ENCODE measurements at regions of chr12 and their contacts with region 1.

Region 1: GRCh38 chr12:70576346-70577282 is 60.6 kb downstream of the PTPRB start:
- H3K4me3 ChIP-seq: no peak overlapping the region
- H3K27ac ChIP-seq: no peak overlapping the region
- H3K4me1 ChIP-seq: no peaks in the 10 kb centered on the region; the same call in 1 of the 2 replicates
- CTCF ChIP-seq: peak; percentile 50; the same call in 1 of the 2 replicates

Region 2: DNA sequence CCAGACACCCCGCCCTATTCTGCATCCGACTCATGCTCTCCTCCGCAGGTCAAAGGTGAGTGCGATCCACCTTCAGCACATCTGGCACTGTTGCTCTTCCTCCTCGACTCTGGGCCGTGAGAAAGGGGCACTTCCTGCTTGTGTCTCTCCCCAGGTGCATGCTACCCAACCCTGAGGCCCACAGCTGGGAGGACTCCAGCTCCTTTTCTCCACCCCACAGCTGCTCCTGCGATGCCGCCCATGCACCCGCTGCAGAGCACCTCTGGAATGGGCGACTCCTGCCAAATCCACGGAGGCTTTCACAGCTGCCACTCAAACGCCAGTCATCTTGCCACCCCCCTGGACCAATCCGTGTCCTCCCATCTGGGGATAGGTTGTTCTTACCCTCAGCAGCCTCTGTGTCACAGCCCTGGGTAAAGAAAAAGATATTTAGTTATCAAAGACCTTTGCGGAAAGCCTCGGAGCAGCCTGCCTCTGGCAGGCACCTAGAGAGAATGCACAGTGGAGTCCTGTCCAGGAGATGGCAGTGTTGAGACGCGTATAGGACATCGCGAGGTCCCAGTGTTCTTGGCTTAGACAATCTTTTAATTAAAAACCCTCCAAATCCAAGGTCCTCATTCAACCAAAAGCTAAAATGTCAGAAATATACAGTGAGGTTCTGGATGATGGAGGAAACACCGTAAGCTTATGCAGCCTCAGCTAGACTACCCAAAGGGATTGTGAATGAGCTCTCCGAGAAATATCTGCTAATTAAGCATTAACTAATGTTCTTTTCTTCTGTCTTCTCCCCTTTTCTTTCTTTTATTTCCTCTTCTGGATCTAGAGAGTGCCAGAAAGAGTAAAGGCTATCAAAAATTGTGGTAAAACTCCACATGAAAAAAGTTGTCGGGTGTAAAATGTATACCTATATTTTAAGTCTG is 697.3 kb before region 1 on chr12:
- CTCF ChIA-PET with region 1: interaction called, 30 read pairs
- POLR2A ChIA-PET with region 1: no interaction called
- H3K4me3 ChIP-seq: no peak overlapping the region
- H3K27ac ChIP-seq: no peak overlapping the region
- H3K4me1 ChIP-seq: no peaks in the 10 kb centered on the region
- CTCF ChIP-seq: peak; percentile 64; the same call in 1 of the 2 replicates

Region 3: DNA sequence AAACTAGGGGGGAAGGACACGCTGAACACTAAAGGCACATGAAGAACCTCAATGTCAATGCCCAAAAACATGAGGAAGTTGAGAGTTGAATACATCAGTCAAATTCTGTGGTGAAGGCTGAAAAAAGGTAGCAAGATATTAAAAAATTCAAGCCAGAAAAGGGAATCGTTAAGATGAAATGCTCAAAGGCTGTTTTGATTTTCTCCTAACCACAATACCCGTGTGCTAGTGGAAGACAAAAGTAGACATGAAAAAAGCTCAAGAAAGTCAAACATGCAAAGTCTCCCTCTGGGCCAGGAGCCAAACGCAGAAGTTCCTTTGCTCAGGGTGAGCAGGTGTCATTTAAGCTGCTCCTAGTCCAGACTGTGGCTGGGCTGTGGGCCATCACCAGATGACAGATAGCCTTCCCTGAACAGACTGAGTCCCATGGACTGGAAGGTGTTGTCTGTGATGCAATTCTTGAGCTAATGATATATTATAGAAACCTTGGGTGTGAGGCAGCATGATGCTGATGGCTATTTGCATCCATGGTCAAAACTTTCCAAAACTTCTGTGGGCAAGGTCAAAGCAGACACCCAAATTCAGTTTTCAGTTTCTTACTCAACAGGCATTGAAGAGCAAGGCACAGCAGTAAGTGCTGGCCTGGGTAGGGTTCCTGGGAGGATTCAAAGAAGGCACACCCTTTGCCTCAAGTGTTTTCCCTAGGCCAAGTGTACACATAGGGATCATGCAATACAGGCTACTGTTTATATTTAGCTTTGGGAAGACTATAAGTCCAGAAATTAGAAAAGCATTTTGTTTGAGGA is 670.0 kb before region 1 on chr12:
- CTCF ChIA-PET with region 1: interaction called, 37 read pairs
- POLR2A ChIA-PET with region 1: no interaction called
- H3K4me3 ChIP-seq: no peak overlapping the region
- H3K27ac ChIP-seq: no peak overlapping the region
- H3K4me1 ChIP-seq: no peaks in the 10 kb centered on the region
- CTCF ChIP-seq: no peak

Region 4: DNA sequence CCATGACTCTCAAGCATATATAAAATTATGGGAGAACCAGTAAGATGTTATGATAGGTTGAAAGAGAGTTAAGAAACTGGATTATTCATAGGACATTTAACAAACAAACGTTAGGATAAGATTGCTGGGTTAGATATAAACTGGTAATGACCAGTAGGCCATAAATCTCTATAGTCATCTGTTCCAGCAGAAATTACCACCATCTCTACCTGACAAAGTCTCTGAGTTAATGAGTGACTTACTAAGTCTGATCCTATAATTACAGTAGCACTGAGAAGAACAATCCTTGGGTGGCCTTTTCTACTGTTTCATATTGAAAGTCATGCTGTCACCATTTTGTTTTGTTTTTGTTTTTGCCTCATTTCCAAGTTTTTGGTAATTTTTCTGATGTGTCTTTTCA is 470.3 kb before region 1 on chr12:
- CTCF ChIA-PET with region 1: no interaction called
- POLR2A ChIA-PET with region 1: no interaction called
- H3K4me3 ChIP-seq: no peak overlapping the region
- H3K27ac ChIP-seq: no peak overlapping the region
- H3K4me1 ChIP-seq: no peaks in the 10 kb centered on the region
- CTCF ChIP-seq: no peak

Region 5: DNA sequence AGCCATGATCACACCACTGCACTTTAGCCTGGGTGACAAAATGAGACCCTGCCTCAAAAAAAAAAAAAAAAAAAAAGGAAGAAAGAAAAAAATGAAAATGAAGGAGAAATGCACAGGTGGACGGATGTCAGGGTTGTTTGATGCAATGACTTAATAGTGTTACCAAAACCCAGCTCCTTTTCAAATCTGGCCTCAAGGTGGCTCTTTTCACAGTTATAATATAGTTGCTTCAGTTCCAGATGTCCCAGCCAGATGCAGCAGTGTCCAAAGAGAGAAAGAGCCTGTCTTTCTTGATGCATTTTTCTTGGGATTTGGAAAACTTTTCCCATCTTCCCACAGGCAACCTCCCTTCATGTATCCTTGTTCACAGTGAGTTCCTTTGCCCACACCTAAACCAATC is 174.0 kb before region 1 on chr12:
- CTCF ChIA-PET with region 1: no interaction called
- POLR2A ChIA-PET with region 1: no interaction called
- H3K4me3 ChIP-seq: no peak overlapping the region
- H3K27ac ChIP-seq: no peak overlapping the region
- H3K4me1 ChIP-seq: no peaks in the 10 kb centered on the region
- CTCF ChIP-seq: no peak

Region 6: DNA sequence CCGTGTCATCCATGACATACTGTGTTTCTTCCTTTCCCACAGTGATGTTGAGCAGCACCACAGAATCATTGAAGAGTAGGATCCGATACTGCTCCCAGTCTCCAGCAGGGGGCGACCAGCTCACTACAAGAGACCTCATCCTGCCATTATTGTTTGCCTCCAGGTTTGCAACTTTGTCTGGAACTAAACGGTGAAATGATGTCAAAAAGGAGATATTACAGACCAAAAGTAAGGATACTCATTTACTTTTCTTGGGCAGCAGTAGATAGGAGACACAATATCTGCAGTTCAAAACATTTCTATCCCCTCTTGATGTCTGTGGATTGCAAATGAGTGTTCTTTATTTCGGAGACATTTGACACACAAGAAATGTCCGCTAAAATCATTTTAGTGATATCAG is 13.4 kb after region 1 on chr12:
- CTCF ChIA-PET with region 1: interaction called, 10 read pairs
- POLR2A ChIA-PET with region 1: no interaction called
- H3K4me3 ChIP-seq: no peak overlapping the region
- H3K27ac ChIP-seq: no peak overlapping the region
- H3K4me1 ChIP-seq: no peaks in the 10 kb centered on the region
- CTCF ChIP-seq: peak; percentile 47